GM12878 (cell line): ENCODE measurements at regions of chr2 and their contacts with region 1.

Region 1: GRCh38 chr2:144162652-144163051 is 357.3 kb downstream of the ZEB2 start:
- DNase-seq: peak; percentile 12
- ATAC-seq: peak; percentile 95
- H3K4me3 ChIP-seq: no peak overlapping the region
- H3K27ac ChIP-seq: no peak overlapping the region
- H3K4me1 ChIP-seq: no peaks in the 10 kb centered on the region
- H3K27me3 ChIP-seq: no peaks in the 10 kb centered on the region
- CTCF ChIP-seq: peak; percentile 53 to 73 (median 69); a peak in 5 of 6 replicates
- EP300 ChIP-seq: no peak
- POLR2A ChIP-seq: no peak
- RAD21 ChIP-seq: peak; percentile 80

Region 2: GRCh38 chr2:143802871-143803650 is 359.6 kb before region 1 on chr2:
- CTCF ChIA-PET with region 1: no interaction called
- POLR2A ChIA-PET with region 1: no interaction called
- RAD21 ChIA-PET with region 1: no interaction called
- SMC1A ChIA-PET with region 1: no interaction called
- in situ Hi-C with region 1: no loop called
- intact Hi-C with region 1: no loop called
- DNase-seq: peak; percentile 37
- ATAC-seq: peak; percentile 89
- H3K4me3 ChIP-seq: peak overlapping the region; percentile 29; the same call in 1 of the 2 replicates
- H3K27ac ChIP-seq: peak overlapping the region; percentile 63
- H3K4me1 ChIP-seq: peaks cover 9% of the 10 kb centered on the region
- H3K27me3 ChIP-seq: no peaks in the 10 kb centered on the region
- CTCF ChIP-seq: peak in 2 of 3 experiments; percentile 26 to 29; a peak in 3 of 6 replicates
- EP300 ChIP-seq: no peak
- POLR2A ChIP-seq: no peak
- RAD21 ChIP-seq: peak; percentile 20; the same call in 1 of the 2 replicates

Region 3: DNA sequence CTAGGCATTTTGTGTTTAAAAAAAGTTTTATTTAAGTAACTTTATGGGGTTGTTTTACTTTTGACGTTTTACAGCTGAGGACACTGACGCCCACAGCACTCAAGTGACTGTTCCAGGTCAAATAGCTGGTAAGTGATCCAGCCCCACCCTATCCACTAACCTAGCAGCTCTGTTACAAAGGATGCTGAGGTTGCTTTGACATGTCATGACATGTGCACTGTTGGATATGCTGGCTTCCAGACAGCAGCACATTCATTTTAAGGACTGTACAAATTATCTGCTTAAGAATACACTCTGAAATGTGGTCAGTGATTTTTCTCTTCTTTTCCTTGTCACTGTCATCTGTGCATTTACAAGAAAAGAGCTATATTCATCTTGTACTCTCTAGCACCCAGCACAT is 60.3 kb before region 1 on chr2:
- CTCF ChIA-PET with region 1: no interaction called
- POLR2A ChIA-PET with region 1: no interaction called
- RAD21 ChIA-PET with region 1: no interaction called
- SMC1A ChIA-PET with region 1: no interaction called
- in situ Hi-C with region 1: no loop called
- intact Hi-C with region 1: no loop called
- DNase-seq: no peak
- ATAC-seq: no peak
- H3K4me3 ChIP-seq: no peak overlapping the region
- H3K27ac ChIP-seq: no peak overlapping the region
- H3K4me1 ChIP-seq: no peaks in the 10 kb centered on the region
- H3K27me3 ChIP-seq: no peaks in the 10 kb centered on the region
- CTCF ChIP-seq: no peak
- EP300 ChIP-seq: no peak
- POLR2A ChIP-seq: no peak
- RAD21 ChIP-seq: no peak

Region 4: GRCh38 chr2:144304202-144304601 is 141.6 kb after region 1 on chr2:
- CTCF ChIA-PET with region 1: no interaction called
- POLR2A ChIA-PET with region 1: no interaction called
- RAD21 ChIA-PET with region 1: no interaction called
- SMC1A ChIA-PET with region 1: no interaction called
- in situ Hi-C with region 1: no loop called
- intact Hi-C with region 1: no loop called
- DNase-seq: no peak
- ATAC-seq: no peak
- H3K4me3 ChIP-seq: no peak overlapping the region
- H3K27ac ChIP-seq: no peak overlapping the region
- H3K4me1 ChIP-seq: no peaks in the 10 kb centered on the region
- H3K27me3 ChIP-seq: no peaks in the 10 kb centered on the region
- CTCF ChIP-seq: no peak
- EP300 ChIP-seq: no peak
- POLR2A ChIP-seq: no peak
- RAD21 ChIP-seq: no peak

Region 5: DNA sequence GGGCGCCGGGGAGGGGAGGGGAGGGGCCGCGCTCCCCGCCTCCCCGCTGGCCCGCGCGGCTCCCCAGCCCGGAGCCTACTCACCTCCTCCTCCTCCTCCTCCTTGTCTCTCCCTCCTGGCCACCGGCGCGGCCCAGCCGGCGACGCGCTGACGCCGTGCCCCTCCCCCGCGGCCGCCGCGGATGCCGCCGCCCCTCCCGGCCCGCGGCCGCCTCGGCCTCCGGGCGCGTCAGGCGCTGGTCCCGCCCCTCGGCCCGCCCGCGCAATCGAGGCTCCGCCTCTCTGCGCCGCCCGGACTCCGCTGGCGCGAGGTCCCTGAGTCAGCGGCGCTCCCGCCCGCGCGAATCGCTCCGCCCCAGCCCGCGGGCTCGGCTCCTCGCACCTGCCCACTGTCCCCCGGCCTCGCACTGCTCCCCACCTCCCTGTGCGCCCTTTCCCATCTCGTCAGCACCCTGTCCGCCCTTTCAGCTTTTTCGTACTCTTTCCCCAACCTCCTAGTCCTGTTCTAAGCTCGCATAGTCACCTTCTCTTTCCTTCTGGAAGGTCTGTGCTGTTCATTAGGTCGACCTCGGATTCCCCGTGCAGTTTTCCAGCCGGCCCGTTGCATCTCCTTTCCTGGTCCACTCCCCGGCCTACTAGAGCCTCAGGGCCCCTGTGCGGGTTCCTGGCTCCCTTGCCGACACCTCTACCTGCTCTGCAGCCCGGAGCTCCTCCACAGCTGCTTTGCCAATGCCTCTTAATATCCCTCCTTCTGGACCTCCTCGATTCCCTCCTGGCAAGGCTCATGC is 169.9 kb after region 1 on chr2:
- CTCF ChIA-PET with region 1: interaction called, 3 read pairs
- POLR2A ChIA-PET with region 1: no interaction called
- RAD21 ChIA-PET with region 1: interaction called, 4 read pairs
- SMC1A ChIA-PET with region 1: interaction called, 6 read pairs
- in situ Hi-C with region 1: no loop called
- intact Hi-C with region 1: loop called (anchors 5 kb)
- DNase-seq: no peak
- ATAC-seq: peak; percentile 90
- H3K4me3 ChIP-seq: peak overlapping the region; percentile 56; the same call in 1 of the 2 replicates
- H3K27ac ChIP-seq: peak overlapping the region; percentile 78
- H3K4me1 ChIP-seq: peaks cover 8% of the 10 kb centered on the region
- H3K27me3 ChIP-seq: no peaks in the 10 kb centered on the region
- CTCF ChIP-seq: no peak
- EP300 ChIP-seq: no peak
- POLR2A ChIP-seq: peak; percentile 70
- RAD21 ChIP-seq: peak; percentile 19; the same call in 1 of the 2 replicates

Region 6: DNA sequence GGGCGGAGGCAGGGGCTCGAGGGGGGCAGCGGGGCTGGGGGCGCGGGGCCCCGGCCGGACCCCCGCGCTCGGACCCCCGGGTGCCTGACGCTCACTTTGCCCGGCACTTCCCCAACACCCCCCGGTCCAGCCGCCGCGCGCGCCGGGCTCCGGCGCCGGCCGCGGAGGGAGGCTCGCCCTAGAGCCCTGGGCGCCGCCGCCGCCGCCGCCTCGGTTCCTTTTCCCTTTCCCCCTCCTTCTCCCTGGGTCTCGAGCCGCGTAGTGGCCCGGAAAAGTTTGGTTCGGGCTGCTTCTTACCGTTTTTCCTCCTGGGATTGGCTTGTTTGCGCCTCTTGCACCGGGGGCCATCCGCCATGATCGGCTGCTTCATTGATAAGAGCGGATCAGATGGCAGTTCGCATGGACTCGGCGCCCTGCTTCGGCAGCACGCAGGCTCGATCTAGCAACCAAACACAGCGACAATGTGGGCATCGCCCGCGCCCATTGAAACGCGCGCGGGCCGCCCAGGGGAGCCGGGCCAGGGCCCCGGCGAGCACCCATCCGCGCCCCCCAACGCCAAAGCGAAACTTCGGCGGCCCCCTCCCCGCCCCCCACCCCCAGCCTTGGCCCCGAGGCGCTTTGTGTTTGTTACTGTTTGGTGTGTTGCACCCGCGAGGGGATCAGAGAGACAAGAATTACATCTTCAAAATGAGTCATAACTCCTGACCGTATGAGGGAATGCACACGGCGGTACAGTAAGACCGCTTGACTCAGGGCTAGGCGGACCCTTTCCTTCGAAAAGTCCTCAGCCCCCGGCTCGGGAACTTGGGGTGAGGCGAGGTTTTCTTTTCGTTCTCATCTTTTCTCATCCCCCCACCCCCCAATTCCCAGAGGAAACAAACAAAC is 354.6 kb after region 1 on chr2:
- CTCF ChIA-PET with region 1: interaction called, 4 read pairs
- POLR2A ChIA-PET with region 1: no interaction called
- RAD21 ChIA-PET with region 1: no interaction called
- SMC1A ChIA-PET with region 1: no interaction called
- in situ Hi-C with region 1: no loop called
- intact Hi-C with region 1: loop called (anchors 10 kb)
- DNase-seq: no peak
- ATAC-seq: peak; percentile 85
- H3K4me3 ChIP-seq: peak overlapping the region; percentile 76
- H3K27ac ChIP-seq: no peak overlapping the region
- H3K4me1 ChIP-seq: peaks cover 18% of the 10 kb centered on the region; the same call in 1 of the 2 replicates
- H3K27me3 ChIP-seq: peaks cover 10 to 41% of the 10 kb centered on the region in 2 experiments
- CTCF ChIP-seq: no peak
- EP300 ChIP-seq: no peak
- POLR2A ChIP-seq: 0 out of 2 replicates have a peak, but pooled peaks have one; percentile 47
- RAD21 ChIP-seq: no peak